ENCODE measurements at regions of chr2 and their contacts with region 1.

Region 1: DNA sequence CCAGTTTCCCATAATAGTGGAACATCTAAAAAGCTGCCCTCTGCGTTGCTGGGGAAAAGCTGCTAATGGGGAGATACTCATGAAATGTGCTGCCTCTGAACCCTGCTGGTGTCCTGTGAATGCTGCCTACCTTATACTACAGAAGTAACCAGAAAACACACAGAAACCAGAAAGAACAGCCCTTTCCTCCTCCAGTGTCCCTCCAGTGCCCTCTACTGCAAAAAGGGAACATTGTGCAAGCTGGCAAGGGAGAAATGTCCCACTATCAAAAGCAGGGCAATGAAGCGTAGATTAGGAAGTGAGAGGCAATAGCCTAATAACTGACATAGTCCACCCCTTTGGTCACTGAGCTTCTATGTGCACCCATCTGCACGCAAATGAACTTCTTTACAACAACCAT is 162.7 kb upstream of the ETAA1 start:
- ATAC-seq: peak in 6 of 8 experiments; percentile 44 to 77 (median 68)
- H3K4me3 ChIP-seq: no peak overlapping the region
- H3K27ac ChIP-seq: no peak overlapping the region
- H3K4me1 ChIP-seq: peaks cover 0 to 9% of the 10 kb centered on the region in 2 donors

Region 2: GRCh38 chr2:66587216-66587615 is 647.2 kb before region 1 on chr2:
- in situ Hi-C with region 1: loop called in 2 of 9 experiments (anchors 10 to 25 kb)
- ATAC-seq: peak in 4 of 8 experiments; percentile 27 to 60 (median 38)
- H3K4me3 ChIP-seq: no peak overlapping the region
- H3K27ac ChIP-seq: no peak overlapping the region
- H3K4me1 ChIP-seq: peaks cover 14 to 34% of the 10 kb centered on the region in 2 donors

Region 3: DNA sequence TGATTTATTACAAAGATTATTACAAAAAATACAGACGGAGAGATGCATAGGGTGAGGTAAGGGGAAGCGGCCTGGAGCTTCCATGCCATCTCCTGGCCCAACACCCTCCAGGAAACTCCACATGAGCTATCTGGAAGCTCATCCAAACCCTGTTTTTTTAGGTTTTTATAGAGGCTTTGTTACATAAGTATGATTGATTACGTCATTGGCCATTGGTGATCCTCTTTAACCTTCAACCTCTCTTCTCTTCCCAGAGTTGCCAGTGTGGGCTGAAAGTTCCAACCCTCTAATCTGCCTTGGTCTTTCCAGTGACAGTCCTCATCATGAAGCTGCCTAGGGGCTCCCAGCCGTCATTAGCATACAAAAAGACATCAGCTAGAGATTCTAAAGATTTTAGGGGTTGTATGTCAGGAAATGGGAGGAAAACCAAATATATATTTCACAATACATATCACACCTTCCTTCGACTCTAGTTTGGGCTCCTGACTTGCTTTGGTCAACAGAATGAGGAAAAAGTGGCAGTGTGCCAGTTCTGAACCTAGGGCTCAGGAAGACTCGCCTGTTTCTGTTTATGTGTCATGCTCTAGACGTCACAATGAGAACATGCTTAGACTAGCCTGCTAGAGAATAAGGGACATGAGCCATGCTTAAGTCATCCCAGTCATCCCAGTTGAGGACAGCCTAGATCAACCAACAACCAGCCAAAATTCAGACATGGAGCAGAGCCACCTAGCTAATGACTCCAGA is 216.8 kb after region 1 on chr2:
- in situ Hi-C with region 1: loop called in 1 of 9 experiments (anchors 25 kb)
- ATAC-seq: peak in 3 of 8 experiments; percentile 43 to 78 (median 53)
- H3K4me3 ChIP-seq: no peak overlapping the region
- H3K27ac ChIP-seq: no peak overlapping the region
- H3K4me1 ChIP-seq: peaks cover 6 to 8% of the 10 kb centered on the region in 2 donors

Region 4: DNA sequence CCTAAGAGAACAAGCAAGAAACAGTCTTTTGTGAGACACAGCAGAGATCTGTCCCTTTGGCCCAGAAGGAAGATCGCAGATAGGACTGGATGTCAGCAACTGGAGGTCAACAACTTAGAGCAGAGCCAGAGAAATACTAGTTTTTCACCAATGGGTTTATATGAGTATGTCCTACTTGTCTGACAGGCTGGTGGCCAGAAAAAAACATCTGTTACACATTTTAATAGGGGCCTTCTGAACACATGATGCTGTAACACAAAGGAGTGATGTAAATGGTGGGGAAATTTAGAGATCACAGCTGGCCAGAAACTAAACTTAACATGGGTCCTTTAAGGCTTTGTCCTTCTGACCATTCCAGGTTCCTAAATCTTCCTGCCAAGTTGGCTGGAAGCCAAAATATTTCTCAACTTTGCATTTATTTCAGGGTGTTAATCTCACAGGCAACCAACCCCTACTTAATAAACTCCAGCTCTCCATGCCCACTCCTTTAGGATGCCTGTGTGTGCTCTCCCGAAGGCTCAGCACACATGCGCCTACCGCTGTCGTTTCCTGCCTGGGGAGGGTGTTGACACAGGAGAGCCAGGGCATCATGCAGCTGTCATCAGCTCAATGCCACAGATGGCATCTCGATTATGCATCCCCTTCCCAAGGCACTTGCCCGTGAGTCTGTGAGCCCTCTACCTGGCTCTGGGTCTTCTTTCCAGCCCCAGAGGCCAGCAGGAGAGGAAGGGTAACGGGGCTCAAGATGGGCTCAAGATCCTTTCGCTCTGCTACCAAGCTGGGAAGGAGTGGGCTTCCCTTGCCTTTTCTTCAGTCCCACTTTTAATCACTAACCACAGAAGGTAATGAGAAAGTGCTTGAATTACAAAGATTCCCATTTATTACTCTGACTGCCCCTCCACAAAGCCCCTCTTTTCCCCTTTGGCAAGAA is 415.2 kb after region 1 on chr2:
- in situ Hi-C with region 1: loop called in 1 of 9 experiments (anchors 25 kb)
- ATAC-seq: peak; percentile 11 to 69 (median 30)
- H3K4me3 ChIP-seq: no peak overlapping the region
- H3K27ac ChIP-seq: peak overlapping the region; percentile 32 to 40
- H3K4me1 ChIP-seq: peaks cover 21 to 28% of the 10 kb centered on the region in 2 donors

Region 5: GRCh38 chr2:68167186-68167585 is 932.7 kb after region 1 on chr2:
- in situ Hi-C with region 1: no loop called
- ATAC-seq: no peak
- H3K4me3 ChIP-seq: no peak overlapping the region
- H3K27ac ChIP-seq: no peak overlapping the region
- H3K4me1 ChIP-seq: no peaks in the 10 kb centered on the region

Measured in motor neuron (in vitro differentiated cells).